AG04449 (cell line): ENCODE measurements at regions of chr5 and their contacts with region 1.

Region 1: DNA sequence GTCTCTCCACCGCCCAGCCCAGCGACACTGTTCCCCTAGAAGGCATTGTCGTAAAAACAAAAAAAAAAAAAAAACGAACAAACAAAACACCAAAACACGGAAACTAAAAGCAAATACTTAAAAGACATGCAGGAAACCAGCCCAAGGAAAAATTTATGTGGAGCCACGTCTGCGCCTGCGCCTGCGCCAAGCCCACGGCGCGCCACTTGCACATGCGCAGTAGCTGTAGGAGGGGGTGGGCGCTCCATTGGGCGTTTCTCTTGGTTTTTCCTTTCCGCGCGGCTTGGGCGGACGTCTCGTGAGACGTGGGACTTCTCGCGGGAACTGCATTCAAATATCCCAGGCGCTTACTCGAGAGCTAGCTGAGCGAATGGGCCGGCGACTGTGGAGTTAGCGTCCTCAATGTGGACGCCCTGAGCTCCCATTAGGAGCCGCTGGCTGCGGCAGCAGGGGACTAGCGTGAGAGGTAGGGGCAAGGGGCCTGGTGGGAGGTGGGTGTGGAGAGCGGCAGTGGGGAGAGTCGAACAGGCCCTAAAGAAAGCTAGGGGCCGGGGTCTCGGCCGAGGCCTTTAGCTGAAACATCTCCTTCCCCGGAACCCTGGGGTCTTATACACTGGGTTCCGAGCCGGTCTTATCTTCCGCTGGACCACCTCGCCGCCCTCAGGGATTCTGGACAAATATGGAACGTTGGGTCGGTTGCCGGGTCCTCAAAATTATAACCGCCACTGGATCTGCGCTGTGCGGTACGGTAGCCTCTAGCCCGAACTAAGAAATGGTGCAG is at the start of gene SPDL1:
- DNase-seq: peak; percentile 75
- H3K4me3 ChIP-seq: peak within 1 kb of the TSS; percentile 86
- CTCF ChIP-seq: no peak

Region 2: DNA sequence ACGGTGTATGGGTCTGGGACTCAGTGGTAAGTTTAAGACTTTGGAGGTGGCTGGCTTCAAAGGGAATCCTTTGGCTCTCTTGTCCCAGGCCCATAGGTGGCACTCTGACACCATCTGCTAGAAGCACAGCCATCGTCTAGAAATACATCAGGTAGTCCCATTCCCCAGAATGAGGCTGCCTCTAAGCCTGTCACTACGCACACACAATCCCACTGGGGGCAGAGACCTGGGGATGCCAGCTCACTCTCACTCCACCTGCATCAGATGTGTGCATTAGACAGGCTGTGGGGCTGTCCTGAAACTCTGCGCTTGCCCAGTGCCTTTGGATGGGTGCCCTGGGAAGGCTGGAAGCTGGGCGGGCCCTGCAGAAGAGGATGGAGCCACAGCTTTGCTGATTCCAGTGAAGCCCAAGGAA is 877.0 kb before region 1 on chr5:
- CTCF ChIA-PET with region 1: interaction called, 22 read pairs
- POLR2A ChIA-PET with region 1: no interaction called
- DNase-seq: no peak
- H3K4me3 ChIP-seq: no peak overlapping the region
- CTCF ChIP-seq: peak; percentile 79

Region 3: DNA sequence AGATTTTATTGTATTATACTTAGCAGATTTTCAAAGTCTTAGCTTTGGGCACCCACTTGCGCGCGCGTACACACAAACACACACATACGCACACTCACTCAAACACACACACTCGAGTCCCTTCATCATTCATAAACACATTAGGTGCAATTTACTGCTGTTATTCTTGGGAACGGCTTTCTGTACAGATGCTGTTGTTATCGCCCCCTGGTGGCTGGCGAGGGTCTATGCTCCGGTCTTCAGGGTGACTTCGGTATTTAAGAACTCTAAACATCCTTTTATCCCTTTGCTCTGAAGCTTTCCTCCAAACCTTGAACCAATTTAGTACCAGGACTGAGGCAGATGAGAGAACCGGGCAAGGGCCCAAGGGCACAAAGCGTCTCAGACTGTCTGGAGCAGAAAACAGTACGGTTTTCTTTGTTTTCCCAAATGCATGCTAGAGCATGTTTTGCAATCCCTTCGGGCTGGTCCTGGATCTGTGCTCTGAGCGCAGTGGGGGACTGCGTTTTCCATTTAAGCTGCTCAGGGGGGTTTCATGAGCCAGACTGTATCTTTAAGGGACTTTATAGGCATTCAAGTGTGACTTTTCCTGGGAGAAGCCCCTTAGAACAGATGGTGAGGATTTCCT is 281.0 kb before region 1 on chr5:
- CTCF ChIA-PET with region 1: interaction called, 14 read pairs
- POLR2A ChIA-PET with region 1: no interaction called
- DNase-seq: peak; percentile 31
- H3K4me3 ChIP-seq: no peak overlapping the region; the same call in 1 of the 2 replicates
- CTCF ChIP-seq: peak; percentile 80

Region 4: GRCh38 chr5:169567079-169567478 is 16.5 kb before region 1 on chr5:
- CTCF ChIA-PET with region 1: interaction called, 20 read pairs
- POLR2A ChIA-PET with region 1: interaction called, 3 read pairs
- DNase-seq: no peak
- H3K4me3 ChIP-seq: no peak overlapping the region
- CTCF ChIP-seq: no peak